IMR-90 (cell line): ENCODE measurements at regions of chr3 and their contacts with region 1.

Region 1: DNA sequence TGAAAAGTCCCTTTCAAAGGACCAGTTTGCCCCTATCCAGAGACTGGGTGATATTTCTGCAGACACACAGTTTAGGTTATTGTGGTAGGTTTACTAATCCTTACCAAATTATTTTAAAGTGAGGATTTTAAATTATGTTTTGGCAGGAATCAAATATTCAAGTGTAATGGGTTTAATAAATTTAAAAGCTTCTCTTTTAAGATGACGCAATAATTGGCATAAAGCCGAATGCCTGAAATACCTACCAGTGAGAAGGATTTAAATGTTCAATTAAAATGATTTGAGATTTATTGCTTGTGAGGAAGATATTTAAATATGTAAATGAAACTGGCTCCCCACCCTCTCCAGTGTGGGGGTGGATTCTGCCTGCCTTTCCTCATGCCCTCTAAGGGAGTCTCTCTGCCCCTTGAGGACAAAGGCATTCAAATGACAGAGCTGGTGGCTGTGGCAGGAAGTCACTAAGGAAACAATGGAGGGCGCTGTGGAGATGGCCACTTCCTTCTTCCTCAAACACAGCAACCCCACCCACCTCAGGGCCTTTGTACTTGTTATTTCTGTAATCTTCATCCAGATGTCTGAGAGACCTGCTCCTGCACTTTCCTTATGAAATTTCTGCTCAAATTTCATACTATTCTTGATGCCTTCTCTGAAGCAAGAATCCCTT is 131.7 kb downstream of the TNIK start:
- DNase-seq: no peak
- ATAC-seq: no peak
- H3K4me3 ChIP-seq: no peak overlapping the region
- H3K27ac ChIP-seq: no peak overlapping the region
- H3K4me1 ChIP-seq: no peaks in the 10 kb centered on the region
- H3K27me3 ChIP-seq: peaks cover 2% of the 10 kb centered on the region; the same call in 1 of the 2 replicates
- CTCF ChIP-seq: no peak
- POLR2A ChIP-seq: no peak
- RAD21 ChIP-seq: no peak

Region 2: GRCh38 chr3:171340434-171340833 is 11.9 kb after region 1 on chr3:
- CTCF ChIA-PET with region 1: interaction called, 10 read pairs
- POLR2A ChIA-PET with region 1: no interaction called
- dilution Hi-C with region 1: no loop called
- in situ Hi-C with region 1: no loop called
- intact Hi-C with region 1: no loop called
- DNase-seq: no peak
- ATAC-seq: no peak
- H3K4me3 ChIP-seq: no peak overlapping the region
- H3K27ac ChIP-seq: no peak overlapping the region
- H3K4me1 ChIP-seq: no peaks in the 10 kb centered on the region
- H3K27me3 ChIP-seq: no peaks in the 10 kb centered on the region
- CTCF ChIP-seq: no peak
- POLR2A ChIP-seq: no peak
- RAD21 ChIP-seq: no peak

Region 3: GRCh38 chr3:171676601-171677175 is 348.1 kb after region 1 on chr3:
- CTCF ChIA-PET with region 1: no interaction called
- POLR2A ChIA-PET with region 1: no interaction called
- dilution Hi-C with region 1: no loop called
- in situ Hi-C with region 1: no loop called
- intact Hi-C with region 1: no loop called
- DNase-seq: no peak
- ATAC-seq: no peak
- H3K4me3 ChIP-seq: no peak overlapping the region
- H3K27ac ChIP-seq: no peak overlapping the region
- H3K4me1 ChIP-seq: 0 out of 2 replicates have a peak, but pooled peaks cover 1% of the 10 kb centered on the region
- H3K27me3 ChIP-seq: no peaks in the 10 kb centered on the region
- CTCF ChIP-seq: no peak
- POLR2A ChIP-seq: no peak
- RAD21 ChIP-seq: no peak